ENCODE measurements at regions of chr3 and their contacts with region 1.

Region 1: GRCh38 chr3:47420511-47421484 is 40.0 kb downstream of the PTPN23 start:
- DNase-seq: peak; percentile 95
- ATAC-seq: peak; percentile 85
- H3K4me3 Mint-ChIP-seq: no peak overlapping the region
- H3K27ac Mint-ChIP-seq: peak overlapping the region; percentile 93
- H3K4me1 Mint-ChIP-seq: peaks cover 8% of the 10 kb centered on the region
- H3K27me3 Mint-ChIP-seq: no peaks in the 10 kb centered on the region
- CTCF ChIP-seq: peak; percentile 95

Region 2: DNA sequence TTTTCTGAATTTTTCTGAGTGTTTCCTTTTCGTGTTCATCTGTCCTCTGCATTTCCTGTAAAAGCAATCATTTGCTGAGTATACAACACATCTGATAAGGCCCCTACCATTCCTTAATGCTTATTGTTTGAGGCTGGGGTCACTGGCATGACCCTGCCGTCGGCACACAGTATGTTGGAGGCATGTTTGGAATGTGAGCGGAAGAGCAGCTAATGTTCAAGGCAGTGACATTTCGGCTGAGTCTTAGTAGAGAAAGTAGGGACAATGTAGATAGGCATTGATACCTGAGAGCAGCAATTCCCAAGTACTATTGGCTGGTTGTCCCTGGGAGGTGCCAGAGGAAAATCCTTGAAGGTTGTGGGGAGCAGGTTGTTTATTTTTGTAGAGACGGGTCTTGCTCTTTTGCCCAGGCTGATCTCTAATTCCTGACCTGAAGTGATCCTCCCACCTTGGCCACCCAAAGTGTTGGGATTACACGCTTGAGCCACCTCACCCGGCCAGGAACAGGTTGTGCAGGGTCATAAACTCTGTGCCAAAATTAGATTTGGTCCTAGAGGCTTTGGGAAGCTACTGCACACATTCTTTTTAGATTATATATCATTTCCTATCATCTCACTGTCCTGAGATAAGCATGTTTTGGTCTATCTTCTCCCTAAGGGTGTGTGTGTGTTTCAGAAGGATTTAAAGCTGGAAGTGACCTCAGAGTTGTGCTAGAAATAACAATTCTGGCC is 26.5 kb before region 1 on chr3:
- CTCF ChIA-PET with region 1: interaction called, 15 read pairs
- POLR2A ChIA-PET with region 1: no interaction called
- DNase-seq: no peak
- ATAC-seq: peak; percentile 46
- H3K4me3 Mint-ChIP-seq: no peak overlapping the region
- H3K27ac Mint-ChIP-seq: peak overlapping the region; percentile 73
- H3K4me1 Mint-ChIP-seq: peaks cover 4% of the 10 kb centered on the region
- H3K27me3 Mint-ChIP-seq: no peaks in the 10 kb centered on the region
- CTCF ChIP-seq: no peak

Region 3: DNA sequence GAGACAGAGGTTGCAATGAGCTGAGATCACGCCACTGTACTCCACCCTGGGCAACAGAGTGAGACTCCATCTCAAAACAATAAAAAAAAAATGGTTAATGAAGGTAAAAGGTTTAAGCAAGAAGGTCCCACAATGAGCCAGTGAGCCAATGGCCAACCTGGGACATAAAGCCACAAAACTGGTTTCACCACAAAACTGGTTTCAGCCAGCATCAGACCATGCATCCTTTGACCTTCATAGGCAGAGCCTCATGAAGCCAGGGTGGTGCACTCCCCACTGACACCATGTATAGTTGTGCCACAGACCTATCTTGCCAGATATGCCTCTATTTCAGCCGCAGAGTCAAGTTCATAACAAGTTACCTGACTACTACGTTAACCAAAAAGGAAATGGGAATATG is 13.0 kb after region 1 on chr3:
- CTCF ChIA-PET with region 1: interaction called, 14 read pairs
- POLR2A ChIA-PET with region 1: no interaction called
- DNase-seq: no peak
- ATAC-seq: no peak
- H3K4me3 Mint-ChIP-seq: no peak overlapping the region
- H3K27ac Mint-ChIP-seq: peak overlapping the region; percentile 51; the same call in 1 of the 2 replicates
- H3K4me1 Mint-ChIP-seq: peaks cover 2% of the 10 kb centered on the region; the same call in 1 of the 2 replicates
- H3K27me3 Mint-ChIP-seq: no peaks in the 10 kb centered on the region
- CTCF ChIP-seq: no peak

Region 4: DNA sequence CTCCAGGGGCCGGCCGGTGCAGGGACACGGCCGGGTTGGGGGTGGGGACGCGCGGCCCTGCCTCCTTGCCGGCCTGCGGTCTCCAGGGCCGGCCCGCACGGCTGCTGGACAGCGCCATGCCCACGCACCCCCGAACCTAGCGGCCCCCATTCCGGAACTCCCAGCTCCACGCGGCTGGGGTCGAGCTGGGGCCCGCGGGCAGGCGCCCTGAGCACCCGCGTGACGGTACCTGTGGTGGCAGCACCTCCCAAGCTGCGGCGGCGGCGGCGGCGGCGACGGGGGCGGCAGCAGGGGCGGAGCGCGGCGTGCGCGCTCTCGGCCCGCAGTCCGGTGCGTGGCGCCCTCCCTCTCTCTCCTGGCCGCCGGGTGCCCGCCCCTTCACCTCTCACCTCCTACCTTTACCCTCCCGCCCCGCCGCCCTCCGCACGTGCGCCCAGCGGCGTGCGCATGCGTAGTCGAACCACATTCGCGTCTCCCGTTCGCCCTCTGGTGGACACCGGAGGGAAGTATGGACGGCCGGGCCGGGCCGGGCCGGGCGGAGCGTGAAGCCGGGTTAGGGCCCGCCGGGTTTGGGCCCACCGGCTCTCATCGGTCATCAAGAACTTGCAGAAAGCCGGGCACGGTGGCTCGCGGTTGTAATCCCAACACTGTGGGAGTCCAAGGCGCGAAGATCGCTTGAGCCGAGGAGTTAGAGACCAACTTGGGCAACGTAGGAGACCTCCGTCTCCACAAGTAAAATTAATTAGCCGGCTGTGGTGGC is 55.0 kb after region 1 on chr3 and contains the start of gene SCAP:
- CTCF ChIA-PET with region 1: interaction called, 18 read pairs
- POLR2A ChIA-PET with region 1: interaction called, 3 read pairs
- DNase-seq: peak; percentile 95
- ATAC-seq: peak; percentile 91
- H3K4me3 Mint-ChIP-seq: peak within 1 kb of the TSS; percentile 92
- H3K27ac Mint-ChIP-seq: peak within 1 kb of the TSS; percentile 91
- H3K4me1 Mint-ChIP-seq: peaks cover 39% of the 10 kb centered on the region
- H3K27me3 Mint-ChIP-seq: no peaks in the 10 kb centered on the region
- CTCF ChIP-seq: peak; percentile 95
- total RNA-seq, gene SCAP: 115 to 117 TPM (median 117 TPM) in 3 replicates

Measured in WTC11 (cell line).